IMR-90 (cell line): ENCODE measurements at regions of chrX and their contacts with region 1.

Region 1: GRCh38 chrX:38985375-38985774 is 184.1 kb downstream of the MID1IP1 start:
- DNase-seq: peak; percentile 11
- ATAC-seq: peak; percentile 37
- H3K4me3 ChIP-seq: no peak overlapping the region
- H3K27ac ChIP-seq: no peak overlapping the region
- H3K4me1 ChIP-seq: no peaks in the 10 kb centered on the region
- H3K27me3 ChIP-seq: peaks cover 4% of the 10 kb centered on the region
- CTCF ChIP-seq: peak; percentile 35; the same call in 1 of the 2 replicates
- POLR2A ChIP-seq: no peak
- RAD21 ChIP-seq: peak; percentile 43; the same call in 1 of the 2 replicates

Region 2: DNA sequence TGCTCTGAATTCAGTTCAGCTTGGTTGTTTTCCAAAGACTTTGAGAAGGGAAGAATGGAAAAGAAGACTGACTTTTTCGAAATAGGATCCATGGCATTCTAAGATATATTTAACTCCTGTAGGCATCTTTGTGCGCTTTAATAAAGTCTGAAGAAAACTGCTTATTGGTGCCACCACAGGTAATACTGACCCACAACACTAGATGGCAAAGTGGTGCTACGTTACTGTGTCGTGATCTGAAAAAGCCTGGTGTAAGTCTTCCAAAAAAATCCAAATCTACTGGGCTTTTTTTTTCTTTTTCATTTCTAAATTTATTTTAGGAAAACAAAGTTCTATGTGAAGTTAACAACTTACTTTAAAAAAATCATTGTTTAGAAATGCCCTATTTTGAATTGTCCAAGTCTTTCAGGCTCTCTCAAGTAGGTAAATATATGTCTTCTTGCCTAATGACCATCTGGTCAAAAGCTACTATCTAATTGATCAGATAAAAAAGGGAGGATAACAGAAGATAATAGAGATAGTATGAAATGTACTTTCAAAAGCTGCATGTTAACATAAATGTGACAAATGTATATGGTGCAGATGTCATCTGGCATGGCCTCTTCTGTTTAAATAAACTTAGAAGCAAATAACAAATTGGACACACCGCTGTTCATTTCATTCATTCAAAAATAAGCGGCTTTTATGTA is 231.1 kb before region 1 on chrX:
- CTCF ChIA-PET with region 1: no interaction called
- POLR2A ChIA-PET with region 1: no interaction called
- dilution Hi-C with region 1: no loop called
- in situ Hi-C with region 1: no loop called
- intact Hi-C with region 1: loop called (anchors 1 kb)
- DNase-seq: peak; percentile 58
- ATAC-seq: peak; percentile 82
- H3K4me3 ChIP-seq: no peak overlapping the region
- H3K27ac ChIP-seq: no peak overlapping the region
- H3K4me1 ChIP-seq: no peaks in the 10 kb centered on the region
- H3K27me3 ChIP-seq: peaks cover 32% of the 10 kb centered on the region
- CTCF ChIP-seq: peak; percentile 64
- POLR2A ChIP-seq: no peak
- RAD21 ChIP-seq: peak; percentile 79

Region 3: DNA sequence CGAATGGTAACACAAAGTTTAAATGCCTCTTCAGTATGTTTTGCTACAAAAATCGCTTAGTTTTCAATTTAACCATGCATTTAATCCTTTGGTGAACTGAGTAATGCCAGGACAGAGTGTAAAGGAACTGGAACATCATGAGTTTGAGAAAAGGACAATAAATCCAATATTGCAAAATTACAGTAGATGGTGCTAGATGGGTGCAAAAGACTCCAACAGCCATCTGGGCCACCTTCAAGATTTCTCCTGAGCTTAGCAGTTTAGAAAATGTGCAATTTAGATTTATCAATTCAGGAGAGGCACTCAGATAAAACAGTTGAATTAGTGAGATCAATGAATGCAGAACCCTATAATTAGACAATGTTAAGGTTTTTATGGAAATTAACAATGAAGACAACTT is 217.3 kb before region 1 on chrX:
- CTCF ChIA-PET with region 1: interaction called, 4 read pairs
- POLR2A ChIA-PET with region 1: no interaction called
- dilution Hi-C with region 1: no loop called
- in situ Hi-C with region 1: loop called (anchors 10 kb)
- intact Hi-C with region 1: loop called (anchors 1 kb)
- DNase-seq: peak; percentile 33
- ATAC-seq: 0 out of 2 replicates have a peak, but pooled peaks have one; percentile 37
- H3K4me3 ChIP-seq: no peak overlapping the region
- H3K27ac ChIP-seq: no peak overlapping the region
- H3K4me1 ChIP-seq: no peaks in the 10 kb centered on the region
- H3K27me3 ChIP-seq: peaks cover 5% of the 10 kb centered on the region
- CTCF ChIP-seq: peak; percentile 62
- POLR2A ChIP-seq: no peak
- RAD21 ChIP-seq: peak; percentile 81

Region 4: GRCh38 chrX:38803586-38804431 is 181.6 kb before region 1 on chrX:
- CTCF ChIA-PET with region 1: interaction called, 3 read pairs
- POLR2A ChIA-PET with region 1: no interaction called
- dilution Hi-C with region 1: no loop called
- in situ Hi-C with region 1: no loop called
- intact Hi-C with region 1: loop called (anchors 2 kb)
- DNase-seq: peak; percentile 34
- ATAC-seq: peak; percentile 74
- H3K4me3 ChIP-seq: peak overlapping the region; percentile 91
- H3K27ac ChIP-seq: peak overlapping the region; percentile 96
- H3K4me1 ChIP-seq: peaks cover 3% of the 10 kb centered on the region; the same call in 1 of the 2 replicates
- H3K27me3 ChIP-seq: no peaks in the 10 kb centered on the region
- CTCF ChIP-seq: no peak
- POLR2A ChIP-seq: 0 out of 2 replicates have a peak, but pooled peaks have one; percentile 42
- RAD21 ChIP-seq: no peak